ENCODE measurements at regions of chr19 and their contacts with region 1.

Region 1: GRCh38 chr19:1266116-1266915 is 2.8 kb upstream of the CIRBP start:
- DNase-seq: peak; percentile 73
- H3K4me3 ChIP-seq: peak overlapping the region; percentile 29 to 51
- H3K27ac ChIP-seq: peak overlapping the region; percentile 82 to 88
- H3K4me1 ChIP-seq: peaks cover 44% of the 10 kb centered on the region
- H3K27me3 ChIP-seq: no peaks in the 10 kb centered on the region
- CTCF ChIP-seq: peak in 1 of 4 experiments; percentile 11
- POLR2A ChIP-seq: no peak

Region 2: DNA sequence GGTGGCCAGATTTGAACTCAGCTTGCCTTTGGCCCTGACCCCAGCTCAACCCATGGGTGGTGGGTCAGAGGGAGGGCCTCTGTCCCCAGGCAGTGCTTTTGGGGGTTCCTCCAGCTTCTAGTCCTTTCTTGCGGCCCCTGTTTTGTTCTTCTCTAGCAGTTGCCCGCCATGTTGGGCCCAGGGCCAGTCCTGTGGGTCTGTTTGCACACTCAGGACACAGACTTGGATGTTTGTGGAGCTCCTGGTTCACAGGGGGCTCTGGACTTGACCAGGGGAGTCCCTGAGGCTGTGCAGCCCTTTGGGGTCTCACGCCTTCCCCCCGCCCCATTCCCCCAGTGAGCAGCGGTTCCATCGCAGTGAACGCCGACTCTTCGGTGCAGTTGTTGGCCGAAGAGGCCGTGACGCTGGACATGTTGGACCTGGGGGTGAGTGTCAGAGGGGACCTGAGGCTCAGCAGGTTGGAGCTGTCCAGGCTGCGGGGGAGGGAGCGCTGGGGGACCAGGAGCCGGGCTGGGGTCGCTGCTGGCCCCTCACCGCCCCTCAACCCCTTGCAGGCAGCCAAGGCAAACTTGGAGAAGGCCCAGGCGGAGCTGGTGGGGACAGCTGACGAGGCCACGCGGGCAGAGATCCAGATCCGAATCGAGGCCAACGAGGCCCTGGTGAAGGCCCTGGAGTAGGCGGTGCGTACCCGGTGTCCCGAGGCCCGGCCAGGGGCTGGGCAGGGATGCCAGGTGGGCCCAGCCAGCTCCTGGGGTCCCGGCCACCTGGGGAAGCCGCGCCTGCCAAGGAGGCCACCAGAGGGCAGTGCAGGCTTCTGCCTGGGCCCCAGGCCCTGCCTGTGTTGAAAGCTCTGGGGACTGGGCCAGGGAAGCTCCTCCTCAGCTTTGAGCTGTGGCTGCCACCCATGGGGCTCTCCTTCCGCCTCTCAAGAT is 22.3 kb before region 1 on chr19:
- intact Hi-C with region 1: loop called (anchors 1 kb)
- DNase-seq: peak; percentile 87
- H3K4me3 ChIP-seq: peak overlapping the region in 1 of 2 donors; percentile 4
- H3K27ac ChIP-seq: peak overlapping the region; percentile 91 to 100
- H3K4me1 ChIP-seq: peaks cover 42% of the 10 kb centered on the region
- H3K27me3 ChIP-seq: no peaks in the 10 kb centered on the region
- CTCF ChIP-seq: peak; percentile 94 to 99 (median 98)
- POLR2A ChIP-seq: no peak

Measured in prostate gland (tissue), 2 donors.